Heart right ventricle (tissue), 16 donors: ENCODE measurements at regions of chr21 and their contacts with region 1.

Region 1: DNA sequence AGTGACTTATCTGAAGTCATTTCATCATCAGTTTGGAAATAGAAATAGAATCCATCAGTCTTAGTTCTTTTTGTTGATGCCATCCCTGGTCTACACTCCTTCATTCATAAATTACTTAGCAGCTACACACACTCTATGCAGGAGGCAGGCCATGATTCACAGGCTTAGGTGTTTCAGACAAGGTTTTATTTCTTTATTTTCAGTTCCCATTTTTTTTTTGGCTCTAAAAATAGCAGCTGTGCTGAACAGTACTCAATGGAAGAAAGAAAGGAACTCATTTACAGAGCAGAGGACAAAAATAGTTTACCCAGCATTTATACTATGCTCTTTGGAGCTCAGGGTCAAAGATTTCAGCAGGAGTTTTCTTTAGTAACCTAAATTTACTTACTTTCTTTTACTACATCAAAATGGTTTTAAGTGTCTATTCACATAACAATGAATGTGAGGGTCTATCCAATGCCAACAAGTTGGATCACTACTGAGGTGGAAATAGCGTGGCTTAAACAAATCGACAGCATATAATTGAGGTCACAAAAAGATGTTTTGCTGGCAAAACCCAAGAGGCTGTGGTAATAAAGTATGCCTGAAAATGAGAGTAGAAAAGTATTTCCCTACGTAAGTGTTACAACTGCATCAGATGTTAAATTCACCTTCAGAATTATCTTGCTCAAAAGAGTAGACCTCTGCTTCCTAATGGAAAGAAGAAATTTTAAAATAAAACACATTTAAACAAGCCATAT is 7.7 kb downstream of the KRTAP19-8 start:
- DNase-seq: no peak
- ATAC-seq: no peak
- H3K4me3 ChIP-seq: no peak overlapping the region
- H3K27ac ChIP-seq: no peak overlapping the region
- H3K4me1 ChIP-seq: no peaks in the 10 kb centered on the region
- H3K27me3 ChIP-seq: no peaks in the 10 kb centered on the region
- CTCF ChIP-seq: no peak

Region 2: DNA sequence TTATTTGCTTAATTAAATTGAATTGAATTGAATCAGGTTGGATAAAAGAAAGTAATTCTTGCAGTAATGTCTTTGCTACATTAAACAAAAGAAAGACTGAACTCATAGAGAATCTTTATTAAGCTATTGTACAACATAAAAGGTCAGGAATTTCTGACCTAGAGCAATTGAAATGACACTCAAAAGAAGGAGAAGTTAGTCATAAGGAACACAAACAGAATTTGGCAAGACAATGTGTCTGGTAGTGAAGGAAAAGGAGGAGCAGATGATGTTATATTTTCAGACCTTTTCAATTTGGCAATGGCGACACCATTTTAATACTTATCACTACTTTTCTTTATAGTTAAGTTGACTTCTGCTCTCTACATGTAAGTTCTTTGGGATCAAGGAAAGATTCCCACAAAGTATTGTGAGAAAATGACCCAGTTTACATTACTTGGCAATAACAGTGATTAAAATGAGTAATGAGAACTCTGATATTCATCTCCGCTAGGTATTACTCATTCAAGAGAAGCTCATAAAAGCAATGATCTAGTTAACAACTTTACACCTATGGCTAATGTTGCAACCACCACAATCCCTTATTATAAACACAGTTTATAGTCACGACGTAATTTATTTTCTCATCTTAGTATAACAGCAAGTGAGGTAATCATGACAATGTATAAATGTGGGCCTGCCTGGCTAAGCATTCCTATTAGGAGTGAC is 260.7 kb before region 1 on chr21:
- intact Hi-C with region 1: loop called in 1 of 10 experiments (anchors 5 kb)
- DNase-seq: no peak
- ATAC-seq: no peak
- H3K4me3 ChIP-seq: no peak overlapping the region
- H3K27ac ChIP-seq: no peak overlapping the region
- H3K4me1 ChIP-seq: no peaks in the 10 kb centered on the region
- H3K27me3 ChIP-seq: no peaks in the 10 kb centered on the region
- CTCF ChIP-seq: no peak

Region 3: GRCh38 chr21:31310750-31311149 is 280.2 kb after region 1 on chr21:
- intact Hi-C with region 1: no loop called
- DNase-seq: no peak
- ATAC-seq: no peak
- H3K4me3 ChIP-seq: no peak overlapping the region
- H3K27ac ChIP-seq: no peak overlapping the region
- H3K4me1 ChIP-seq: no peaks in the 10 kb centered on the region
- H3K27me3 ChIP-seq: no peaks in the 10 kb centered on the region
- CTCF ChIP-seq: no peak